ENCODE measurements at regions of chr9 and their contacts with region 1.

Region 1: GRCh38 chr9:89602978-89603766 is 1.6 kb upstream of the GADD45G start:
- DNase-seq: peak; percentile 70
- H3K4me3 ChIP-seq: peak overlapping the region; percentile 47 to 61
- H3K27ac ChIP-seq: peak overlapping the region in 1 of 2 experiments; percentile 93; a peak in 2 of 4 replicates
- H3K4me1 ChIP-seq: peaks cover 24 to 40% of the 10 kb centered on the region in 2 experiments
- H3K27me3 ChIP-seq: peaks cover 21% of the 10 kb centered on the region; the same call in 1 of the 2 replicates
- CTCF ChIP-seq: peak; percentile 92
- EP300 ChIP-seq: no peak
- RAD21 ChIP-seq: peak; percentile 98

Region 2: GRCh38 chr9:89661956-89662717 is 59.0 kb after region 1 on chr9:
- CTCF ChIA-PET with region 1: interaction called, 13 read pairs
- POLR2A ChIA-PET with region 1: interaction called, 13 read pairs
- DNase-seq: peak; percentile 96
- H3K4me3 ChIP-seq: peak overlapping the region; percentile 3 to 12; a peak in 3 of 4 replicates
- H3K27ac ChIP-seq: peak overlapping the region in 1 of 2 experiments; percentile 90; a peak in 2 of 4 replicates
- H3K4me1 ChIP-seq: peaks cover 0 to 50% of the 10 kb centered on the region in 2 experiments; a peak in 2 of 4 replicates
- H3K27me3 ChIP-seq: no peaks in the 10 kb centered on the region
- CTCF ChIP-seq: no peak
- EP300 ChIP-seq: peak in 1 of 2 experiments; percentile 9; a peak in 1 of 4 replicates
- RAD21 ChIP-seq: no peak

Region 3: DNA sequence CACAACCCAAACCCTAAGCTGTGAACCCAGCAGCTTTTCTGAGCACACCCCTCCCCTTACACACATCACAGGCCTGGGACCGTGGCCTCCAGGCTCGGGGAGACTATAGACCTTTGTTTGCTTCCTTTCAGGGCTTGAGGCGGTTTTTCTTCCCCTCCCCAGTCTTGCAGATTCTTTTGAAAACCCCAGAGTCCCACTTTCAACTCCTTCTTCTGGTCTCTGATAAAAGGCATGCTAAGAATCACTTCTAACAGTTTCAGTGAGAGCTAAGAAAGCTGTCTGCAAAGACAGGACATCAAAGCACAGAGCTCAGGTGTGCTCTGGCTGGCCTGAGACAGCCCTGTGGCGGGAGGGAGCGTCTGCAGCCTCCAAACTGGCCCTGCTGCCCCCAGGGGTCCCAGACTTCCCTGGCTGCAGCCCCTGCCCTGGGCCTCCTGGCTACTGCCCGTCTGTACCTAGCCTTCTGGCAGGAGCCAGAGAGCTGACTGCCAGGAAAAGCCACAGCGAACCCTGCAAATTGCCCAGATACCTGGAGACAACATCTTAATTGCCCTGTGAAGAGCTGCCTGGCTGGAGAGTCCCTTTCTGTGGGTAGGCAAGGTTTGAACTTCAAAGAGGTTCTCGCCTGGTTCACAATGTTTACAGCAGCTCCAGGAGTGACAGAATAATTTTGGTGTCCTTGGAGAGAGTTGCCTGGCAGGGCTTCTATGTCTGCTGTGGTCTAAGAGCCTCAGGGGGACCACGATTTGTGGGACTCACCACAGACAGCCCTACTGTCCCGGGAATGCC is 140.6 kb after region 1 on chr9:
- CTCF ChIA-PET with region 1: interaction called, 27 read pairs
- POLR2A ChIA-PET with region 1: interaction called, 27 read pairs
- DNase-seq: peak; percentile 55
- H3K4me3 ChIP-seq: no peak overlapping the region
- H3K27ac ChIP-seq: peak overlapping the region in 1 of 2 experiments; percentile 69; a peak in 2 of 4 replicates
- H3K4me1 ChIP-seq: peaks cover 0 to 64% of the 10 kb centered on the region in 2 experiments; a peak in 1 of 4 replicates
- H3K27me3 ChIP-seq: no peaks in the 10 kb centered on the region
- CTCF ChIP-seq: no peak
- EP300 ChIP-seq: peak in 1 of 2 experiments; percentile 42; a peak in 1 of 4 replicates
- RAD21 ChIP-seq: peak; percentile 25; the same call in 1 of the 2 replicates

Region 4: GRCh38 chr9:89802781-89803355 is 199.7 kb after region 1 on chr9:
- CTCF ChIA-PET with region 1: interaction called, 12 read pairs
- POLR2A ChIA-PET with region 1: interaction called, 3 read pairs
- DNase-seq: peak; percentile 45
- H3K4me3 ChIP-seq: no peak overlapping the region
- H3K27ac ChIP-seq: peak overlapping the region in 1 of 2 experiments; percentile 47; a peak in 1 of 4 replicates
- H3K4me1 ChIP-seq: peaks cover 0 to 37% of the 10 kb centered on the region in 2 experiments; a peak in 2 of 4 replicates
- H3K27me3 ChIP-seq: no peaks in the 10 kb centered on the region
- CTCF ChIP-seq: no peak
- EP300 ChIP-seq: no peak
- RAD21 ChIP-seq: peak; percentile 14; the same call in 1 of the 2 replicates

Region 5: DNA sequence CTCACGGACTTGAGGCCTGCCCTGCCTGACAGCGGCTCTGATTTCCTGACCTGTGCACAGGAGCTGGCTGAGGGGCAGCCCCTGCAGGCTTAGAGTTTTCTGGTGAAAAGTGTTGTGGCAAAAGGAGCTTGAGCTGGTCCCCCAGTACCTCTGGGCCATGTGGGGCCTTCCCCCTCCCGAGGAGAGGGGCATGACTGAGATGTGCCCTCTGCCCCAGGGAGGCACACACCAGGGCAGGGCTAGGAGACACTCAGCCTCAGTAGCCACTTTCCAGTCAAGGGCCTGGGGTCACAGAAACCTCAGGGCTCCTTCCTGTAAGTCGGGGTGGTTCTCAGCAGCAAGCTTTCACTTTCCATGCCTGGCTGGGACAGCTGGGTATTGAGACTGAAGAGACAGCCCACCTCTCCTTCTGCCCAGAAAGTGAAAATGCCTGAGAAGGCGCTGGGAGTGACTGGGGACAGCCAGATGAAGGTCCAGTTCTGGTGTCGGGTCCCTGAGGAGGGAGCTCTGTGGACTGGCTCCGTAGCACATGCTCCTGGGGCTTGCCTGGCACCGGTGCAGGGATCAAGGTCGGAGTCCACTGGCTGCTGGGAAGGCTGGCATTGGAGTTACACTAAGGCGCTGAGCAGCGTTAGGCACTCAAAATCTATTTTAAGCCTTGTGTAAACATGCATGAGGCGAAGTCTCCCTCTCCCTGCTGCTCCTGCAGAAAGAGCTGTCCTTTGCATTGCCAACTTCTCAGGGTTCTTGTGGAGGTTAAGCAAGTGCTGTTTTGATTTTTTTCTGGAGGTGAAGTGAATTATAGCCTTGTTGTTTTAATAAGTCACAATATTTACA is 396.6 kb after region 1 on chr9:
- CTCF ChIA-PET with region 1: interaction called, 20 read pairs
- POLR2A ChIA-PET with region 1: interaction called, 4 read pairs
- DNase-seq: peak; percentile 23
- H3K4me3 ChIP-seq: no peak overlapping the region
- H3K27ac ChIP-seq: no peak overlapping the region
- H3K4me1 ChIP-seq: peaks cover 0 to 29% of the 10 kb centered on the region in 2 experiments; a peak in 2 of 4 replicates
- H3K27me3 ChIP-seq: no peaks in the 10 kb centered on the region
- CTCF ChIP-seq: no peak
- EP300 ChIP-seq: no peak
- RAD21 ChIP-seq: no peak

Region 6: GRCh38 chr9:90102292-90102901 is 499.2 kb after region 1 on chr9:
- CTCF ChIA-PET with region 1: interaction called, 604 read pairs
- POLR2A ChIA-PET with region 1: interaction called, 13 read pairs
- DNase-seq: peak; percentile 84
- H3K4me3 ChIP-seq: no peak overlapping the region; a peak in 1 of 4 replicates
- H3K27ac ChIP-seq: no peak overlapping the region
- H3K4me1 ChIP-seq: peaks cover 0 to 9% of the 10 kb centered on the region in 2 experiments; a peak in 1 of 4 replicates
- H3K27me3 ChIP-seq: no peaks in the 10 kb centered on the region
- CTCF ChIP-seq: peak; percentile 65
- EP300 ChIP-seq: no peak
- RAD21 ChIP-seq: peak; percentile 94

Measured in SK-N-SH (cell line).